A549 (cell line): ENCODE measurements at regions of chr19 and their contacts with region 1.

Region 1: DNA sequence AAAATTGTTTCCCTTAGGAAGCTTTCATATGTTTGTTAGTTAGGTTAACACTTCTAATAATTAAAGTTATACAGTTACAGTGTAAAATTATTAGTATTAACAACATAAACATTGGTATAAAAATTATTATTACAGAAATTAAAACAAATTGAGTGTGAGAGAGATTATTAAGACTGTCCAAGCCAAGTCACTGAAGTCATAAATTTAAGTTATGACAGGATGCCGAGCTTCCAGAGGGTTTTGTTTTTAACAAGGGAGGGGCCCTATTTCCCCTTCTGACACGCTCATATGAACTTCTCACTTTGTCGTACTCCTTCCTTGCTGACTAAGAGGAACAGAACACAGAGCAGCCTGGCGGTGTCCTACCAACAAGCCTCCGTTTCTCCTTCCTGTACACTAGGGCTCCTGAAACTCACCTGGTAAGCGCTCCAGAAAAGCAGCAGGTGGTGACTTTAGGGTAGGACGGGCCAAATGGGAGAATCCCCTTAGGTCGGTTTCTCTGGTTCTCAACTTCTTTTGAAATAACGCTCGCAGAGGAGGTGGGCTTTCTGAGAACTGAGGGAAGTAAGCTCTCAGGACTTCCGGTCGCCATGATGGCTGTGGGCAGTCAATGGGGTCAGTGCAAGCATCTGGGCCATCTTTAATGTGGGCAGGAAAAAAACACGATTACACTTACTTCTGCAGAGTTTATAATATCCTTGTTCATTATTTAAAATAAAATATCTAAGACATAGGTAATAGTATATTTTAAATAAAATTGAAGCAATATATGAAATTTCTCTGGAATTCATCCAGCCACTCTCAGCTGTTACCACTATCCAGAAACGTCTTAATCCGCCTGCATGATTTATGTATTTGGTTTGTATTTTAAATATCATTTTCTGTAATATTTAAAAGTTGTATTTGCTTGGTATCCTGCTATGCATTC is at the start of gene CARD8:
- DNase-seq: peak; percentile 88 to 93
- ATAC-seq: peak; percentile 95 to 98
- H3K4me3 ChIP-seq: peak within 1 kb of the TSS; percentile 57
- H3K27ac ChIP-seq: peak within 1 kb of the TSS; percentile 87
- H3K4me1 ChIP-seq: peaks cover 13% of the 10 kb centered on the region
- CTCF ChIP-seq: no peak
- EP300 ChIP-seq: no peak
- POLR2A ChIP-seq: peak; percentile 53
- RAD21 ChIP-seq: no peak
- polyA plus RNA-seq, gene CARD8: 27.4 and 34.7 TPM in 2 replicates

Region 2: DNA sequence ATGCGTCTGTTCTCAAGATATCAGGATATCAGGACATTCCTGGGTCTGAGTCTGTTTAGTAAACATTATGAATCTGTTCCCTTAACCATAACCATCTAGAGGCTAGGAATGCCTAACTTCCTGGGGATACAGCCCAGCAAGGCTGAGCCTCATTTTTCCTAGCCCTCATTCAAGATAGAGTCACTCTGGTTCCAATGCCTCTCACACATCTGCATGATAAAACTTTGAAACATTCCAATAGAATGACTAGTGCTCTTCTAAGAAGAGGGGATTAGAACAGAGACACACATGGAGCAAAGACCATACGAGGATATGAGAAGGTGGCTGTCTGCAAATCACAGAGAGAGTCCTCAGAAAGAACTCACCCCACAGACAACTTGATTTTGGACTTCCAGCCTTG is 191.1 kb before region 1 on chr19:
- CTCF ChIA-PET with region 1: no interaction called
- POLR2A ChIA-PET with region 1: no interaction called
- DNase-seq: no peak
- ATAC-seq: no peak; a peak in 1 of 6 replicates
- H3K4me3 ChIP-seq: no peak overlapping the region
- H3K27ac ChIP-seq: no peak overlapping the region
- H3K4me1 ChIP-seq: no peaks in the 10 kb centered on the region
- CTCF ChIP-seq: no peak
- EP300 ChIP-seq: no peak
- POLR2A ChIP-seq: no peak
- RAD21 ChIP-seq: no peak

Region 3: DNA sequence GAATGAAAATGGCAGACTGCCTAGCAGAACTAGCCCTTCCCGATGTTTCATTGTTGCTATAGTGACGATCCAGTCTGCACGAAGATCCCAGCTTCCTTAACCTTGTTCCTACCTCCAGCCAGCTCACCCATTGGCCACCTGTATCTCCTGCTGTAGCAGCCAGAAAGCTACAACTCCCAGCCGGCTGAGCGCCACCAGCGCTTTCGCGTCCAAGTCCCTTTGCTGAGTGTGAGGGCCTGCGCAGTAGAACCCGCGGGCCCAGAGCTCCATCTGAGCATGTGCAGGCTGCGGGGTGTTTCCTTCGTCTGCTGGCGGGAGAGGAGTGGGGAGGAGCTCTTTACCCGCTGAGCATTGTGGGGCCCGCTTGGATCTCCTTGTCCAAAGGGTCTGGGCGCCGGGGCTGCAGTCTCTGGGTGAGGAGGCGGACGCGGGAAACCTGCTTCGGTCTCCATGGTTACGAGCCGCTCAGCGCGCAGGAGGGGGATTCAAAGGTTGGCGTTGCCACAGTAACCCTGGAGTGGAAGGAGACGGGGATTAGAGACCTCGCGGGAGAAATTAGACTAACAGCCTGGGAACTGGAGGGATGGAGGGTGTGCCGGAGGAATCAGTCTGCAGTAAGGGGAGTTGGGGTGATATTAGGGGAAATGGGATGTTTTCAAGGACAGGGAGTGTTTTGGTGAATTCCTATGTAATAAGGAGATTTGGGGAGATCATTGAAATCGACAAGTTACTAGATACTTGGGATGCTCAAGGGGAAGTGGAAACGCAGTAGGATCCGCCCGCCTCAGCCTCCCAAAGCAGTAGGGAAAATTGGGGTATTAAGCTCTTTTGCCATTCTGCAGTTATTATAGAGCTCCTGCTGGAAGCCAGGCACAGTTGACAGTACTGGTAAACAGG is 51.7 kb before region 1 on chr19:
- CTCF ChIA-PET with region 1: interaction called, 34 read pairs
- POLR2A ChIA-PET with region 1: interaction called, 17 read pairs
- DNase-seq: peak; percentile 98 to 99
- ATAC-seq: peak; percentile 99
- H3K4me3 ChIP-seq: peak overlapping the region; percentile 71
- H3K27ac ChIP-seq: peak overlapping the region; percentile 85 to 90
- H3K4me1 ChIP-seq: peaks cover 9% of the 10 kb centered on the region; the same call in 2 of the 3 replicates
- CTCF ChIP-seq: no peak
- EP300 ChIP-seq: no peak
- POLR2A ChIP-seq: peak; percentile 81
- RAD21 ChIP-seq: no peak

Region 4: GRCh38 chr19:48239580-48240141 is 16.0 kb before region 1 on chr19:
- CTCF ChIA-PET with region 1: interaction called, 10 read pairs
- POLR2A ChIA-PET with region 1: no interaction called
- DNase-seq: no peak
- ATAC-seq: no peak
- H3K4me3 ChIP-seq: no peak overlapping the region
- H3K27ac ChIP-seq: no peak overlapping the region
- H3K4me1 ChIP-seq: peaks cover 4% of the 10 kb centered on the region; the same call in 1 of the 3 replicates
- CTCF ChIP-seq: no peak
- EP300 ChIP-seq: no peak
- POLR2A ChIP-seq: no peak
- RAD21 ChIP-seq: no peak

Region 5: GRCh38 chr19:48271531-48272151 is 16.0 kb after region 1 on chr19:
- CTCF ChIA-PET with region 1: interaction called, 45 read pairs
- POLR2A ChIA-PET with region 1: interaction called, 5 read pairs
- DNase-seq: peak; percentile 75 to 90
- ATAC-seq: peak; percentile 85 to 87
- H3K4me3 ChIP-seq: peak overlapping the region; percentile 64
- H3K27ac ChIP-seq: peak overlapping the region; percentile 80 to 89
- H3K4me1 ChIP-seq: 0 out of 3 replicates have a peak, but pooled peaks cover 11% of the 10 kb centered on the region
- CTCF ChIP-seq: no peak
- EP300 ChIP-seq: no peak
- POLR2A ChIP-seq: no peak; the same call in 1 of the 2 replicates
- RAD21 ChIP-seq: no peak

Region 6: GRCh38 chr19:48290771-48291488 is 35.3 kb after region 1 on chr19:
- CTCF ChIA-PET with region 1: interaction called, 11 read pairs
- POLR2A ChIA-PET with region 1: no interaction called
- DNase-seq: peak; percentile 87 to 91
- ATAC-seq: peak; percentile 86 to 91
- H3K4me3 ChIP-seq: peak overlapping the region; percentile 49
- H3K27ac ChIP-seq: peak overlapping the region; percentile 34 to 81; a peak in 5 of 6 replicates
- H3K4me1 ChIP-seq: peaks cover 8% of the 10 kb centered on the region
- CTCF ChIP-seq: peak; percentile 99
- EP300 ChIP-seq: no peak
- POLR2A ChIP-seq: no peak
- RAD21 ChIP-seq: peak; percentile 92 to 93